Sciatic nerve (tissue), 2 donors: ENCODE measurements at regions of chr12 and their contacts with region 1.

Region 1: DNA sequence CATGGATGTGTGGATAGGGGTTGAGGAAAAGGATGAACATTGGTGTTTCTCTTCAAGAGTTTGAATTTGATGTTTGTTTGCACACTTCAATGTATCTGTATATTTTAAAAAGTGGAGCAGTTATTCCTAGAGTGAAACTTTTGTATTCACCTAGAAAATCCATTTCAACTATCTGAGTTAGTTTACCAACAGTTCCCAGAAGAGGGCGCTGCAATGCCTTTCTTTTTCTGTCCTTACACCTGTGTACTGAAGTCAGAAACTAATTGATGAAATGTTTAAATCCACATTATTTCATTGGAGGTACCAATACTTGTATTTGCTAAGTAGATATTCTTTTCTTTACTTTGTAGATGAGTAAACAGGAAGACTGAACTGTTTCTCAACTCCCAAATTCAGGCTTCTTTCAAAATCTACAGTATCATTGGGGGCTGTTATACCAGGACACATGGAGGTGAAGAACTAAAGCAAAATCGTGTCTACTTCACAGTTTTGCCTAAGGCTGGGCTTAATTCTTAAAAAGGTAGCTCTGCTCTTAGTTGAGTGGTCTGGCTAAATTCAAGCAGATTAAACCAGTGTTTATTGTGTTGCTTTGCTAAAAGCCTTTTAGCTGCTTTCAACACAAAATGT is 26.6 kb upstream of the KLRB1 start:
- DNase-seq: peak; percentile 68
- ATAC-seq: no peak

Region 2: DNA sequence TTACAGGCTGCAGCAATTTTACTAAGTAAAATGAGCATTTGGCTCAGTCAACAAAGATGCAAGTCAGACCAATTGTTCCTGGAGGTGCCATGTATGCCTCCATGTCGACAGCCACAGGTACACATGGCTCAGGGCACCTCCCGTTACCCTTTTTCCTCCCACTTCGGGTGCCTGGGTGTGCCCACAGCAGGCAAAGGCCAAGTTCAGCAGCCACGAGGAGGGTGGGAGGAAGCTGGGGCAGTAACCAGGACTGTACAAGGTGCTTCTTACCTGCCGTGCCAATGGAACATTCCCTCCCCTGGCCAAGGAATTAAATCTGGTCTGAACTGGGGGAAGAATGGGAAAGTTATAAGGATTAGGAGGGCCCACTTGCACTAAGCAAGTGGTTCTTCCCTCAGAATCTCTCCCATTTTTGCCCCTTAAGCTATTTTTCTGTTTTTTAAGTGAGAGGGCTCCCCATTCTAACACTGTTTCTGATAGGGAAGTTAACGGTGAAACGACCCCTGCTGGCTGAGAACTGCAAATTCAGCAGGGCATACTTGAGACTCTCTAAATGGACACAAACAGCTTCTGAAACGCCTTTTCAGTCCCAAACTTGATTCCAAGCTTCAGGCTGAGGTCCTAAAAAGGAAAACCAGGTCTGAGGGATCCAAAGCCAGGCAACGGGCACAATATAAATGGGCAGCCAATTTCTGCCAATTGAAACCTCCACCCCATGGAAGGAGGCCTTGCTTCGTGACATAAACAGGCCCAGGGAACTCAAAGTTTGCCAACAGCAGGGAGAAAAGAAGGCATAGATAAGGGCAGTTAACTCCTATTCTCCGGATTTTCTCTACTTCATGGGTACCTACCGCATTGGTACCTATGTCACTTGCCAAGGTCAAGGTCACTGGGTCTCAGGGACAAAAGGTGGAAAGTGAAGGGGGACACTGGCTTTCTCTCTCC is 73.8 kb after region 1 on chr12:
- intact Hi-C with region 1: loop called (anchors 10 kb)
- DNase-seq: peak; percentile 67
- ATAC-seq: peak; percentile 48